Body of pancreas (tissue), 4 donors: ENCODE measurements at regions of chr2 and their contacts with region 1.

Region 1: DNA sequence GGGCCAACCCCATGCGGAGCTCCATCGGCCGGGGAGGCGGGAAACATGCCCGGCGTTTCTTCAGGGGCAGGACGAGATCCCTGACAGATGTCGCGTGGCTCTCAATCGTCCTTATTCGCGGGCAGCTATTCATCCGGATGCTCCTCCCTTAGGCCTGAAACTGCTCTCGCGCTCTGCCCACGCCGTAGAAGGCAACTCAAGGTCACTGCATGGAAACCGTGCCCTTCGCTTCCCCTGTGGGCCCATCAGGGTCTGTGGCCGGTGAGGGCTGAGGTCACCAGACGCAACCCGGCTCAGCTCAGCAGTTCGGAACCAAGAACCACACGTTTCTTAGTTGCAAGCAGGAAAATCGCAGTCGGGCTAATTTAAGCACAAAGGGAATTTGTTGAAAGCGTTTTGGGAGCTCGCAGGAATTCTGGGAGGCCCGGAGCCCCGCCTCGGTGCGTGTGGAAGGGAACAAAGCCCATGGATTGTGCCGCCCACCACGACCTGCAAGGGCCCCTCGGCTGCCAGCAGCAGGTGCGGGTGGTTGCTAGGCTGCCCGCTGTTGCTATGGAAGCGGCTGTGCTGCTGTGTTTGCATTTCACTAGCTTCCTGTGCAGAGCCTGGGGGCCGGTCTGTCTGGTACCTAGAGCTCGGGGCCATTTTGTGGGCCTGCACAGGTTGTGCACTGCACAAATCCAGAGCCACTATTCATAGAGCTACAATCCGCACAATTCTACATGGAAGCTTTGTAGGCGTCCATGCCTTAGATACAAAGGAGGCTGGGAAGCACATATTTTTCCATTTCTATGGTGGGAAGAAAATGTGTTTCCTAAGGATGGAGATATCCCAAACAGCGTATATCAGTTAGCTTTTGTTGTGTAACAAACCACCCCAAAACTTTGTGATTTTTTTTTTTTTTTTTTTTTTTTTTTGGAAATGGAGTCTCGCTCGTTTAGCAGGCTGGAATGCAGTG is 6.0 kb upstream of the ALLC start:
- DNase-seq: peak; percentile 43 to 64 (median 54)
- ATAC-seq: peak; percentile 49
- H3K4me3 ChIP-seq: no peak overlapping the region
- H3K27ac ChIP-seq: peak overlapping the region in 2 of 4 donors; percentile 49 to 63
- H3K4me1 ChIP-seq: peaks cover 13% of the 10 kb centered on the region
- H3K27me3 ChIP-seq: no peaks in the 10 kb centered on the region
- CTCF ChIP-seq: no peak
- POLR2A ChIP-seq: no peak

Region 2: GRCh38 chr2:3423492-3424175 is 228.3 kb before region 1 on chr2:
- intact Hi-C with region 1: loop called (anchors 10 kb)
- DNase-seq: peak; percentile 41 to 76 (median 64)
- ATAC-seq: no peak
- H3K4me3 ChIP-seq: no peak overlapping the region
- H3K27ac ChIP-seq: no peak overlapping the region
- H3K4me1 ChIP-seq: no peaks in the 10 kb centered on the region
- H3K27me3 ChIP-seq: no peaks in the 10 kb centered on the region
- CTCF ChIP-seq: peak; percentile 63 to 97 (median 89)
- POLR2A ChIP-seq: no peak